ENCODE measurements at regions of chr1 and their contacts with region 1.

Region 1: DNA sequence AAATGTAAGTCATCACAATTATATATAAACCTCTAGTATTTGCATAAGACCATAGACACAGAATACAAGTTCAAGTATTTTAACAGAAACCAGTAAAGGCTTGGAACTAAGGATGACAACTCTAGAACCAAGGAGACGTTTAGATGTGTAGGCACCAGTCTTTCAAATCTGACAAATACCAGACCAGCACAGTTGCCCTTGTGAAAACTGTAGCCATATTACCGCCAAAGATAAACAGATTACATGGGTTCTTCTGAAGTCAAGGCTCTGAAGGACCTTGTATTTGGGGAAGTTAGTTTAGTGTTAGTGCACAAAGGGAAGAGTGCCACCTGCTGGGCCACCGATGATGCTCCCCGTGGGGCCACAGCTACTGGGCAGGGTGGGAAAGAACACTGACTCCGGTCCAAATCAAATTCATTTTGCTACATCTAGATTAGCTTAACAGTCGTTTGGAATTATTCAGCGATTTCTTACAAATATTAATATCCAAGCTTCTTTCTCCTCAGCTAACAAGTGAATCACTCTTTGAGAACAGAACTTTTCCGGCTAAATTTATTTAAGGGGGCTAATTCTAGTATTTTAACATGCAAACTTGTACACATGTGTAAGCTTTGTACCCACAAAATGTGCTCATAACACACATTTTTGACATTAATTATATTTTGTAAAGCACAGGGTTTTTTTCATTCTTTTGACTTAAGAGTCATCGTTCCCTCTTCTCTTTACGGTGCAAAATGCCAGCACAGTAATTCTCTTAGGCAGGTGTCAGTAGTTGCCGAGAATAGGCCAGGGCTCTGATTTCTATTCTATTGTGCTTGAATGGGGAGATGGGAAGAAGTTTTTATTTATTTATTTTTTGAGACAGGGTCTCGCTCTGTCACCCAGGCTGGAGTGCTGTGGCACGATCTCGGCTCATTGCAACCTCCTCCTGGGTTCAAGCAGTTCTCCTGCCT is 8.0 kb upstream of the NIBAN1 start:
- DNase-seq: peak; percentile 79 to 84
- H3K4me3 ChIP-seq: no peak overlapping the region
- H3K27ac ChIP-seq: peak overlapping the region in 1 of 2 donors; percentile 12
- H3K4me1 ChIP-seq: peaks cover 0 to 6% (median 0%) of the 10 kb centered on the region in 4 donors
- H3K27me3 ChIP-seq: no peaks in the 10 kb centered on the region
- CTCF ChIP-seq: peak; percentile 89 to 95

Region 2: DNA sequence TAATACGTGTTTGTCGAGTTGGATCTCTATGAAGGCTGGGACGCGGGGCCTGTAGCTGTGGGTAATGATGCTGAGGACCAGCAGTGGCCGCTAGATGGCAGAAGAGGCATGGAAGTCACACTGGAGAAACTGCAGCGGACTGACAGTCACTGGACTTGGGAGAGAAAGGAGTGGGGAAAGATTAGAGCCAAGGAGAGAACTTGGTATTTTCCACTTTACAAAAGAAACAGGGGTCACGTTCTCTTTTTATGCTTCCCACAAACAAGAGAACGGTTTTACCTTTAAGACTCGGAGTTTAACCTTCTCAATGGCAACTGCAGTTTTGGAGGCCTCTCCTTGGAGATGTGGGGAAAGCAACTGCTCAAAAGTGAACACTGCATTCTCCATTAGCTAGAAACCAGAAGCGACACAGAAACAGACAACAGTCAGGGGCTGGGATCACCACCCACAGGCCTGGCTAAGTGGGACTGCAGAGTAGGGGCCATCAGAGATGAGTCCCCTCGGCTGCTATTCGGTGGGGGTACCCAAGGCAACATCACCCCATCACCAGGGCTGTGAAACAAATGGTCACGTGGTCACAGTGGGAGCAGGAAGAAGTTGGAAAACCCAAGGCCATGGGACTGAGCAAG is 176.5 kb before region 1 on chr1:
- intact Hi-C with region 1: loop called (anchors 2 kb)
- DNase-seq: peak; percentile 93 to 95
- H3K4me3 ChIP-seq: no peak overlapping the region
- H3K27ac ChIP-seq: peak overlapping the region; percentile 9 to 55
- H3K4me1 ChIP-seq: peaks cover 0 to 22% (median 15%) of the 10 kb centered on the region in 4 donors
- H3K27me3 ChIP-seq: no peaks in the 10 kb centered on the region
- CTCF ChIP-seq: peak; percentile 89 to 96

Region 3: DNA sequence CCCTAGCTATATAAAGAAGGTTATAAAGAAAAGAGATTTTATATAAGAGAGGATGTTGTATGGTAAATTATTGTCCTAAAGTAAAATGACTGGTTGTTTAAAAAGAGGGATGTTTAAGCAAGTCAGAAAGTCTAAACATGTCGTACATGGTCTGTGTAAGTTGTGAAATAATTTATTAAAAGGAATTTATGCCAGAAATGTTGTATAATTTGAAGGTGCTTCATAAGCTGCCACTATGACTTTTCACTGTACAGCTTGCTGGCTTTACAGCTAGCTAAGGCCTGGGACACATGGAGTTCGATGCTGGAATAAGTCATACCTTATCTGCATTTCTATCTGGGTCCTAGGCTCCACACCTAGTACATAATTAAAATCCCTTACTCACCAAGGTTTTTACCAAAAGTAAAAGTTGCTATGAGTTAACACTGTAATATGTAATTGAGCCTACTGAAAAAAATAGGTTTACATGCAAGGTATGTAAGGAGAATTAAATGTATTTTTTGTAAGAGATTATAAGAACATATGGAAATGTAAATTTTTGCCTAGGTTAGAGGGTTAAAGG is 168.7 kb before region 1 on chr1:
- intact Hi-C with region 1: loop called (anchors 2 kb)
- DNase-seq: no peak
- H3K4me3 ChIP-seq: no peak overlapping the region
- H3K27ac ChIP-seq: no peak overlapping the region
- H3K4me1 ChIP-seq: peaks cover 0 to 34% (median 26%) of the 10 kb centered on the region in 4 donors
- H3K27me3 ChIP-seq: no peaks in the 10 kb centered on the region
- CTCF ChIP-seq: no peak

Region 4: GRCh38 chr1:184854496-184855140 is 127.7 kb before region 1 on chr1:
- intact Hi-C with region 1: no loop called
- DNase-seq: no peak
- H3K4me3 ChIP-seq: no peak overlapping the region
- H3K27ac ChIP-seq: no peak overlapping the region
- H3K4me1 ChIP-seq: peaks cover 0 to 36% (median 6%) of the 10 kb centered on the region in 4 donors
- H3K27me3 ChIP-seq: no peaks in the 10 kb centered on the region
- CTCF ChIP-seq: no peak

Measured in tibial artery (tissue), 4 donors.